ENCODE measurements at regions of chr3 and their contacts with region 1.

Region 1: DNA sequence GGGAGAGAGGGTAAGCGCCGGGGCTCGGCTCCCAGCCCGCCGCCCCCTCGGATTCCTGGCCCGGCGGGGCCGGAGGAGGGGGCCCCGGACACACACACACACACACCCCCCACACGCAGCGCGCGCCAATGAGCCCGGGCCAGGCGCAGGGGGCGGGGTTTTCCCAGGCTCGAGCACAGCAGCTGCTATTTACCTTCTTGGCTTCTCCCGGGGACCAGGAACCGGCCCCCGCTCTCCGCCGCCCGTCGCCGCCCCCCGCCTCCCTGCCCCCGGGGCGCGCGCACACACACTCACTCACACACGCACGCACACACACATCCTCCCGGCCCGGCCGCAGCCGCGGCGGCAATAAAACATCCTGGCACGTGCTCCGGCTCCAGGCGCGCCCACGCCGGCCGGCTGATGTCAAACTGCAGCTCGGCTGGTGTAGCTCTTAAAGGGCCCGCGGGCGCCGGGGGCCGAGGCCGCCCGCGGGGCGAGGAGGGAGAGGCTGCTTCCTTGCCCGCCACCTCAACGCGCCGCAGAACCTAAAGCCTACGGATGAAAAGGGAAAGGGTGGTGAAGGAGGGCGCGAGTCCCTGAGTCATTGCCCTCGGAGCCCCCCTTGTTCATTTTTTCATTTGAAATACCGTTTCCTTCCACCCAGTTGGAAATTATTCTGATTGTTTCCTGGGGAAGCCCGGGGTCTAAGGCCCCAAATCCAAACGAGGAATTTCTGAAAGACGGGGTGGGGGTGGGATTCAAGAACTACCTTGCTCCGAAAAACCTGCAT is 1.0 kb upstream of the HES1 start:
- DNase-seq: peak; percentile 95
- H3K4me3 ChIP-seq: peak overlapping the region; percentile 84
- H3K27ac ChIP-seq: peak overlapping the region; percentile 75
- H3K4me1 ChIP-seq: peaks cover 63% of the 10 kb centered on the region
- CTCF ChIP-seq: no peak

Region 2: DNA sequence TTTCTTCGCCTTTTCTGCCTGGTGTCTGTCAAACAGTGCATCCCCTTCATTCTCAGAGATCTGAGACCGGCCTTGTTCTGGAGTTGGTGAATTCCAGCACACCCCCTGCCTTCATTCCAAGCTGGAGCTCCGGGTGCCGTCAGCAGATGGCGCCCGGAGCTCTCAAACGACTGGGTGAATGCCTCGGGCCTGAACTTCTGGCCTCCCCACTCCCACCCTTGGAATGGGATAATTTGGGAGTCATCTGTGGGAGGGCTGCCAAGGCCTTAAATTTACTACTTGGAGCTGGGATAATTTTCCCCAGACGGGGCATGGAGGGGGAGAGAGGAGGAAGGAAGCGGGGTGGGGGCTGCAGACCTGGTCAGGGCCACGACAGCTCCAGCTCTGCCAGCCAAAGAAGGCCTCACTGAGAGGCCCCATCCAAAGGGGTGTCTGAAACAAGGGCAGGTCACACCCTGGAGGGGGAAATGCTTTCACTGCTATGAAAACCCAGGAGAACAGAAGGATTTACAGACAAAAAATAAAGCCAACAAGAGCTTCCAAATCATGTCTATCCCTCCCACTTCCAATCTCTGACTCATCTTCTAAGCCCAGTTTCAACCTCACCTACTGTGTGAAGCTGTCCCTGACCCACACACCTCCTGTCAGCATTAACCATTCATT is 354.0 kb before region 1 on chr3:
- CTCF ChIA-PET with region 1: no interaction called
- POLR2A ChIA-PET with region 1: no interaction called
- intact Hi-C with region 1: loop called (anchors 2 kb)
- DNase-seq: peak; percentile 64
- H3K4me3 ChIP-seq: no peak overlapping the region
- H3K27ac ChIP-seq: no peak overlapping the region
- H3K4me1 ChIP-seq: peaks cover 20% of the 10 kb centered on the region
- CTCF ChIP-seq: peak; percentile 90

Region 3: GRCh38 chr3:193869221-193870201 is 265.4 kb before region 1 on chr3:
- CTCF ChIA-PET with region 1: no interaction called
- POLR2A ChIA-PET with region 1: interaction called, 9 read pairs
- intact Hi-C with region 1: loop called (anchors 1 kb)
- DNase-seq: no peak
- H3K4me3 ChIP-seq: peak overlapping the region; percentile 59
- H3K27ac ChIP-seq: peak overlapping the region; percentile 89
- H3K4me1 ChIP-seq: peaks cover 73% of the 10 kb centered on the region
- CTCF ChIP-seq: no peak

Region 4: GRCh38 chr3:194070634-194071409 is 64.1 kb before region 1 on chr3:
- CTCF ChIA-PET with region 1: interaction called, 3 read pairs
- POLR2A ChIA-PET with region 1: interaction called, 13 read pairs
- intact Hi-C with region 1: loop called (anchors 1 kb)
- DNase-seq: peak; percentile 86
- H3K4me3 ChIP-seq: peak overlapping the region; percentile 61
- H3K27ac ChIP-seq: peak overlapping the region; percentile 54
- H3K4me1 ChIP-seq: peaks cover 57% of the 10 kb centered on the region
- CTCF ChIP-seq: no peak

Region 5: GRCh38 chr3:194103983-194104751 is 30.8 kb before region 1 on chr3:
- CTCF ChIA-PET with region 1: interaction called, 9 read pairs
- POLR2A ChIA-PET with region 1: interaction called, 172 read pairs
- intact Hi-C with region 1: loop called (anchors 1 kb)
- DNase-seq: peak; percentile 99
- H3K4me3 ChIP-seq: peak overlapping the region; percentile 81
- H3K27ac ChIP-seq: peak overlapping the region; percentile 96
- H3K4me1 ChIP-seq: peaks cover 88% of the 10 kb centered on the region
- CTCF ChIP-seq: no peak

Region 6: DNA sequence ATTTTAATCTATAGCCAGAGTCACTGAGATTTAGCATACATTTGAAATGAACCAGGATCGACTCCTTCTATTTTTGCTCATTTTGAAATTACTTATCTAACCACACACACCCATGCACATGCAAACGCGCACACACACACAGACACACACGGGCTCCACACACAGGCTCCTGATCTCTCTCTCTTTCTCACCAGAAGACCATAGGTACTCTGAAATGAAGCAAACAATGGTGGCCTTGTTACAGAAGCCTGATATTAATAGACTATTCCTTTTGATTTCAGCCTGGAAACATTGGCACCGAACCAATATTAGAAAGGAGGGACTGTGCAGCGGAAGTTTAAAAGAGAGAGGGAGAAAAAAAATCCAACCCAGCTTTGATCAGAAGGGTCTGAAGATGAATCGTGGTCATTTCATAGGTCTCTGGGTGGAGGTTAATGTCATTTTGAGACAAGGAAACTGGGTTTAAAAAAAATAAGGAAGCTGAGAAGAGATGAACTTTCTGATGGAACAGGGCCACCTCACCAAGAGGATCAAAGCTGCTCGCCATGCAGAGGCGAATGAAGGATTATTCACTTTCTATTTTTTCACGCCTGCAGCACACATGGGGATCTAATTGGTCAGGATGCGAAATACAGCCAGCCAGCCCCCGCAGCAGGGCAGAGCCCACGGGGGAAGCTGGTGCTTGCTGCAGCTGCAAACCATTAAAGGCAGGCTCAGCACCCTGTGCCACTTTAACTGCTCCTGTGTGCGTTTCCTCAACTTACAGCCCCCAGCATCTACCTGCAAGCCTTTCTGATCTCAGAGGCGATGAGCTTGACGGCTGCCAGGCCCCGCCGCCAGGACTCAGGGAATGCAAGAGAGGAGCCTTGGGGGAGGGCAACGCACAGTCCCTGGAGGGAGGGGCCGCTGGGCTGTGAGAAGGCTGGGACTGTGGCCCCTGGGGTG is 89.8 kb after region 1 on chr3:
- CTCF ChIA-PET with region 1: no interaction called
- POLR2A ChIA-PET with region 1: no interaction called
- intact Hi-C with region 1: no loop called
- DNase-seq: no peak
- H3K4me3 ChIP-seq: no peak overlapping the region
- H3K27ac ChIP-seq: no peak overlapping the region
- H3K4me1 ChIP-seq: no peaks in the 10 kb centered on the region
- CTCF ChIP-seq: no peak

Region 7: DNA sequence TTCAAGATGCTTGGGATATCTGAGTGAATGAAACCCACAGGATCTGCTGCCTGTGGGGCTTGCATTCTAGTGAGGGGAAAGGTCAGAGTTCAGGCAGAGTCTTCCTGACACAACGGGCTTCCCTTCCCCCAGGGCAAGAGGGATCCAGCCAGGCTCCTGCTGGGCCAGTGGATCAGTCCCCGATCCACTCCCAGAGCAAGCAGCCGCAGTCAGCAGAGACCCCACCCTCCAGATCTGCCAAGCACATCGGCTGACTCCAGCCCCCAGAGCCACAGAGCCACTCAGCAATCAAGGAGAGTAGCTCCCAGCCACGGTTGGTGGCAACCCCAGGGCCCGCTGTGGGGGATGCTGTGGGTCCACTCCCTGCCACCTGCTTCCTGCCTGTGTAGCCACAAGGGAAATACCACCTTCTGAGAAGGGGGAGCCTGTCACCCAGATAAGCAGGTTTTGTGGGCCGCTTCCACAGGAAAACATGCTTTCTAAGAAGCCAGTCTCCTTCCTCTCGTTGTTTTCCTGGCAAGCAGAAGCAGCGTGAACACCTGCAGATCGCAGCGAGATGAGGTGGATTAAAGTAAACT is 171.3 kb after region 1 on chr3:
- CTCF ChIA-PET with region 1: no interaction called
- POLR2A ChIA-PET with region 1: no interaction called
- intact Hi-C with region 1: loop called (anchors 2 kb)
- DNase-seq: peak; percentile 85
- H3K4me3 ChIP-seq: no peak overlapping the region
- H3K27ac ChIP-seq: no peak overlapping the region
- H3K4me1 ChIP-seq: peaks cover 24% of the 10 kb centered on the region
- CTCF ChIP-seq: no peak

Region 8: GRCh38 chr3:194486540-194487288 is 351.8 kb after region 1 on chr3 and contains the start of gene ATP13A3:
- CTCF ChIA-PET with region 1: no interaction called
- POLR2A ChIA-PET with region 1: no interaction called
- intact Hi-C with region 1: loop called (anchors 2 kb)
- DNase-seq: peak; percentile 96
- H3K4me3 ChIP-seq: peak within 1 kb of the TSS; percentile 73
- H3K27ac ChIP-seq: peak within 1 kb of the TSS; percentile 41
- H3K4me1 ChIP-seq: peaks cover 36% of the 10 kb centered on the region
- CTCF ChIP-seq: no peak
- total RNA-seq, gene ATP13A3: 84.5 and 103 TPM in 2 replicates